Heart left ventricle (tissue), 16 donors: ENCODE measurements at regions of chr22 and their contacts with region 1.

Region 1: DNA sequence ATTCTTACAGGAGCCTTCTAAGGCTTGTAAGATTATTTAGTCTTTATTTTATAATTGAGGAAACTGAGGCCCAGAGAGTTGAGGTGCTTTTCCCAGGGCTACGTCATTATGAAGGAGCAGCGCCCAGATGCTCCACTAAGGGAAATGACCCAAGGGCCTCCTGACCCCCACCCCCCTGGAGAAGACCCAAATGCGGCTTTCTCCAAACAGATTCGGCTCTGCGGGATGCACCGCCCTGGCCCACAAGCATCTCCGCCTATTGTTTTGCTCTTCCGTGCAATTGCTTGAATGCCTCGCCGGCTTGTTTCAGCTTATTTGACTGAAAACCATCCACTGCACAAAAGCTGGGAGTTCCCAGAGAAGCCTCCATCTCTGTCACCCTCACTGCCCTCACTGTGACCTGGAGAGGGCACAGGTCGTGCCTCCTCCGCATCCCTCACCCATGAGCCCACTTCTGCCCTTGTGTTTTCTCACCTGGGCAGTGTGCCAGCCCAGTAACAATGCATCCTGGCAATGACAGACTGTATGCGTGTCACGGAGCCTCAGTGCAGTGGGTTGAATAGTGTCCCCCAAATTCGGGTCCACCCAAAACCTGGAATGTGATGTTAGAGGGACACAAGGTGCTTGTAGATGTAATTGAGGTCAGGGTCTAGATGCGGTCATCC is 790.2 kb downstream of the TBC1D22A start:
- DNase-seq: no peak
- ATAC-seq: no peak
- H3K4me3 ChIP-seq: no peak overlapping the region
- H3K27ac ChIP-seq: no peak overlapping the region
- H3K4me1 ChIP-seq: peaks cover 0 to 1% (median 0%) of the 10 kb centered on the region in 12 donors
- H3K27me3 ChIP-seq: peaks cover 0 to 24% (median 0%) of the 10 kb centered on the region in 9 donors
- CTCF ChIP-seq: no peak
- POLR2A ChIP-seq: no peak

Region 2: GRCh38 chr22:47601666-47602065 is 49.0 kb after region 1 on chr22:
- intact Hi-C with region 1: loop called in 1 of 10 experiments (anchors 2 kb)
- DNase-seq: no peak
- ATAC-seq: no peak
- H3K4me3 ChIP-seq: no peak overlapping the region
- H3K27ac ChIP-seq: no peak overlapping the region
- H3K4me1 ChIP-seq: no peaks in the 10 kb centered on the region
- H3K27me3 ChIP-seq: peaks cover 0 to 25% (median 0%) of the 10 kb centered on the region in 9 donors
- CTCF ChIP-seq: no peak
- POLR2A ChIP-seq: no peak